Panc1 (cell line): ENCODE measurements at regions of chr15 and their contacts with region 1.

Region 1: GRCh38 chr15:64809649-64810496 is 15.6 kb downstream of the PIF1 start:
- DNase-seq: no peak
- ATAC-seq: peak; percentile 90
- H3K4me3 ChIP-seq: no peak overlapping the region
- H3K27ac ChIP-seq: no peak overlapping the region
- H3K4me1 ChIP-seq: no peaks in the 10 kb centered on the region
- H3K27me3 ChIP-seq: no peaks in the 10 kb centered on the region
- CTCF ChIP-seq: peak; percentile 96

Region 2: GRCh38 chr15:64582202-64582601 is 227.7 kb before region 1 on chr15:
- CTCF ChIA-PET with region 1: no interaction called
- POLR2A ChIA-PET with region 1: no interaction called
- in situ Hi-C with region 1: no loop called
- intact Hi-C with region 1: no loop called
- DNase-seq: no peak
- ATAC-seq: peak; percentile 34; the same call in 1 of the 2 replicates
- H3K4me3 ChIP-seq: no peak overlapping the region
- H3K27ac ChIP-seq: no peak overlapping the region
- H3K4me1 ChIP-seq: peaks cover 3% of the 10 kb centered on the region; the same call in 1 of the 2 replicates
- H3K27me3 ChIP-seq: no peaks in the 10 kb centered on the region
- CTCF ChIP-seq: no peak

Region 3: DNA sequence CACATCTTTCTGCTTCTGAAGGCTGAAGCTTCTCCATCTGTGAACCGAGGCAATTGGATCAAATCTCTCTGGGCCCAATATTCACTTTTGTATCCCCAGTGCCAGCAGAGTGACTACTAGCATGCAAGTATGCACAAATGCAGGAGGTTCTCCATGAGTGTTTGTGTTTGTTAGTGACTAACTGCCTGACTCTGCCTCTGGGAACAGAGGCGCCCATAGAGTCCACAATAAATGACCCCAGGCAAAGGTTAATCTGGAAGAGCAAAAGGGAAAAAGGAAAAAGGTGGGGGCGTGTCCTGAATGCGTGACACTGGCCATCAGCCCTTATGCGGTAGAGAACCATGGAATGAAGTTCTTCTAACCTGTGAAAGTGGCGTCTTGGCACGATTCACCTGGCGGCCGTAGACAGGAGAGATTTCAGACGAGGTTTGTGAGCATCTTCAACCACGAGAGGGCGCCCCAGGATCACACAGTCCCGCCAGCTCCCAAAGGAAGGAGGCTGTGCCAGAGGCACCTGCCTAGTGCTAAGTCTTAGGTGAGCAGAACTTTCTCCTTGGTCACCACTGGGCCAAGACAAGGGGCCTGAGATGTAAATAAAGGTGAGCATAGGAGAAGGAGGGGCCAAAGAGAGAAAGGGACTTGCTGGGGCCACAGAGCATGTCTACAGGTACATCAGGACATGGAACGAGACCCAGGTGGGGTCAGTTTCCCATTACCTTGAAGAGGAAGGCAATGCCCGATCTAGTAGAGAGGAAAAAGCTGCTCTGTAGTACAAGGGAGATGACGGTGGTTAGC is 78.7 kb before region 1 on chr15:
- CTCF ChIA-PET with region 1: interaction called, 12 read pairs
- POLR2A ChIA-PET with region 1: no interaction called
- in situ Hi-C with region 1: no loop called
- intact Hi-C with region 1: loop called (anchors 1 kb)
- DNase-seq: peak; percentile 54
- ATAC-seq: peak; percentile 91
- H3K4me3 ChIP-seq: no peak overlapping the region
- H3K27ac ChIP-seq: no peak overlapping the region
- H3K4me1 ChIP-seq: peaks cover 3% of the 10 kb centered on the region; the same call in 1 of the 2 replicates
- H3K27me3 ChIP-seq: no peaks in the 10 kb centered on the region
- CTCF ChIP-seq: peak; percentile 95

Region 4: GRCh38 chr15:64825431-64826294 is 15.8 kb after region 1 on chr15 and contains the start of gene PIF1:
- CTCF ChIA-PET with region 1: interaction called, 3 read pairs
- POLR2A ChIA-PET with region 1: interaction called, 15 read pairs
- in situ Hi-C with region 1: no loop called
- intact Hi-C with region 1: no loop called
- DNase-seq: peak; percentile 96
- ATAC-seq: peak; percentile 96
- H3K4me3 ChIP-seq: peak within 1 kb of the TSS; percentile 63 to 94
- H3K27ac ChIP-seq: peak within 1 kb of the TSS; percentile 99
- H3K4me1 ChIP-seq: peaks cover 6% of the 10 kb centered on the region; the same call in 1 of the 2 replicates
- H3K27me3 ChIP-seq: no peaks in the 10 kb centered on the region
- CTCF ChIP-seq: no peak
- total RNA-seq, gene PIF1: 38.6 TPM

Region 5: DNA sequence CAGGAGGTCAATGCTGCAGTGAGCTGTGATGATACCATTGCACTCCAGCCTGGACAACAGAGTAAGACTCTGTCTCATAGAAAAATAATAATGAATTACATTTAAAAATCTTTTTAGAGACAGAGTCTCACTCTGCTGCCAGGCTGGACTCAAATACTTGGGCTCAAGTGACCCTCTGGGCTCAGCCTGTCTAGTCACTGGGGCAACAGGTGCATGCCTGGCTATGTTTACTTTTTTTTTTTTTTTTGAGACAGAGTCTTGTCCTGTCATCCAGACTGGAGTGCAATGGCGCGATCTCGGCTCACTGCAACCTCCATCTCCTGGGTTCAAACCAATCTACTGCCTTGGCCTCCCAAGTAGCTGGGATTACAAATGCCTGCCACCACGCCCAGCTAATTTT is 23.8 kb after region 1 on chr15:
- CTCF ChIA-PET with region 1: interaction called, 3 read pairs
- POLR2A ChIA-PET with region 1: interaction called, 14 read pairs
- in situ Hi-C with region 1: no loop called
- intact Hi-C with region 1: no loop called
- DNase-seq: no peak
- ATAC-seq: no peak
- H3K4me3 ChIP-seq: no peak overlapping the region
- H3K27ac ChIP-seq: no peak overlapping the region
- H3K4me1 ChIP-seq: peaks cover 6% of the 10 kb centered on the region
- H3K27me3 ChIP-seq: no peaks in the 10 kb centered on the region
- CTCF ChIP-seq: no peak

Region 6: GRCh38 chr15:64877435-64877834 is 67.6 kb after region 1 on chr15:
- CTCF ChIA-PET with region 1: no interaction called
- POLR2A ChIA-PET with region 1: no interaction called
- in situ Hi-C with region 1: no loop called
- intact Hi-C with region 1: no loop called
- DNase-seq: no peak
- ATAC-seq: peak; percentile 37; the same call in 1 of the 2 replicates
- H3K4me3 ChIP-seq: no peak overlapping the region
- H3K27ac ChIP-seq: no peak overlapping the region
- H3K4me1 ChIP-seq: peaks cover 7% of the 10 kb centered on the region; the same call in 1 of the 2 replicates
- H3K27me3 ChIP-seq: no peaks in the 10 kb centered on the region
- CTCF ChIP-seq: no peak

Region 7: DNA sequence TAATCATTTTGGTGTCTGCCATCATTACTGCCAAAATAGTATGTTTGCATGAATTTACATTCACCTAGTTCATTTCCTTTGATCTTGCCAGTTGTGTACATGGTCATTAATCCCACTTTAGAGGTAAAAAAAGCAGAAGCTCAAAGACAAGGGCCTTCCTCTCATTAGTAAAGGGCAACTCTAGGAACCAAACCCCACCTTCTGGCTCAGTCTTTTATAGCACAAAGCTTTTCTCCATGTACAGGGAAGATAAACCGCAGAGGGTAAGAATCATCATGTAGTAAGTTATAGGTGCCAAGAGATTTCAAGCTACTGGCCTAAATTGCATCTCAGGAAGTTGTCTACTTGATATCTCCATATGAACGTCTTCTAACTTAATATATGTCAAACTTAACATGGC is 199.1 kb after region 1 on chr15:
- CTCF ChIA-PET with region 1: no interaction called
- POLR2A ChIA-PET with region 1: interaction called, 14 read pairs
- in situ Hi-C with region 1: no loop called
- intact Hi-C with region 1: no loop called
- DNase-seq: no peak
- ATAC-seq: no peak
- H3K4me3 ChIP-seq: no peak overlapping the region
- H3K27ac ChIP-seq: no peak overlapping the region
- H3K4me1 ChIP-seq: no peaks in the 10 kb centered on the region
- H3K27me3 ChIP-seq: no peaks in the 10 kb centered on the region
- CTCF ChIP-seq: no peak; the same call in 1 of the 2 replicates